Activated B cell treated with CpG ODN at 0.5 μM for 24 hours (primary cell): ENCODE measurements at regions of chr10 and their contacts with region 1.

Region 1: DNA sequence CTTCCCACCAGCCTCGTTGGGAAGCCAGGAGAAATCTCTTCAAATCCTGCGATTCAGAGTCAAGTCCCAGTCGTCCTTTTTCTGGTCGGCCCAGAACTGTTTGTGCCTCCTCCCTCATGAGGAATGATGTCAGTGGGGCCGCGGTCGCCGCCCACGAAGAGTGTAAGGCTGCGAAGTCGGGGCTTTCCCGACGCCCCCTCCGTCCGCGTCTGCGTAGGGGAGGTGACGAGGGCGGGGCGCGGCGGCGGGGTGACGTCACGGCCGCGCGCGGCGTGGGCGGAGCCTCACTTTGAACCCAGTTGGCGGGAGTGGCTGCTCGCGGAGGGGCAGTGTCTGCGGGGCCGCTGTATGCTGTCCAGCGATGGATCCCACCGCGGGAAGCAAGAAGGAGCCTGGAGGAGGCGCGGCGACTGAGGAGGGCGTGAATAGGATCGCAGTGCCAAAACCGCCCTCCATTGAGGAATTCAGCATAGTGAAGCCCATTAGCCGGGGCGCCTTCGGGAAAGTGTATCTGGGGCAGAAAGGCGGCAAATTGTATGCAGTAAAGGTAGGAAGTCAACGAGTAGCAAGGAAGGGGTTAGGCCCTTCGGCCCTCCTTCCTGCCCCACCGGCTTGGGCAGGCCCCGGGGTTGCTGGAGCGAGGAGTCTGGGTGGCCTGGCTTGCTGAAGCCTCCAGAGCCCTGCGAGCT is at the start of gene MASTL:
- DNase-seq: peak; percentile 97
- ATAC-seq: peak; percentile 84
- H3K4me3 Mint-ChIP-seq: peak within 1 kb of the TSS; percentile 100
- H3K27ac Mint-ChIP-seq: peak within 1 kb of the TSS; percentile 100
- H3K4me1 Mint-ChIP-seq: peaks cover 44% of the 10 kb centered on the region
- H3K27me3 Mint-ChIP-seq: no peaks in the 10 kb centered on the region
- CTCF ChIP-seq: no peak
- total RNA-seq, gene MASTL: 11.2 and 12.4 TPM in 2 replicates

Region 2: GRCh38 chr10:26697163-26697921 is 457.9 kb before region 1 on chr10 and contains the start of gene PDSS1:
- CTCF ChIA-PET with region 1: no interaction called
- POLR2A ChIA-PET with region 1: interaction called, 16 read pairs
- intact Hi-C with region 1: loop called (anchors 1 kb)
- DNase-seq: peak; percentile 65
- ATAC-seq: peak; percentile 87
- H3K4me3 Mint-ChIP-seq: peak within 1 kb of the TSS; percentile 93
- H3K27ac Mint-ChIP-seq: peak within 1 kb of the TSS; percentile 84
- H3K4me1 Mint-ChIP-seq: peaks cover 27% of the 10 kb centered on the region
- H3K27me3 Mint-ChIP-seq: no peaks in the 10 kb centered on the region
- CTCF ChIP-seq: no peak
- total RNA-seq, gene PDSS1: 8.7 and 9.0 TPM in 2 replicates

Region 3: DNA sequence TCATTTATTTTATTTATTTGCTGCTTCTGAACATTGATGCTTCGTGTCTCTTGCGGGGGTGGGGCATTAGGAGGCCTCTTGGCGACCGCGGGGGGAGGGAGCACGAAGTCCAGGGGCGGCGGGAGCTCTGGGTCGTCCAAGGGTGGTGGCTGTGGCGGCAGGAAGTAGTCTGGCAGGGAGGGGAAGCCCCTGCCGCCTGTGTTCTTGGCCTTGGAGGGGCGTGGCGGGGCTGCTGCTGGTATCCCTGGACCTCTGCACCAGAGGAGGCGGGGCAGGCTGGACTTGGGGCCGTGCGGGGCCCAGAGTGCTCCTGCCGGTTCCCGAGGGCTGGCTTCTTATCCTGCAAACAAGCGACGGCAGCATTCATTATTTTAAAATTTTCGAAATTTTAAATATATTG is 224.0 kb before region 1 on chr10:
- CTCF ChIA-PET with region 1: no interaction called
- POLR2A ChIA-PET with region 1: no interaction called
- intact Hi-C with region 1: no loop called
- DNase-seq: no peak
- ATAC-seq: peak; percentile 64
- H3K4me3 Mint-ChIP-seq: no peak overlapping the region
- H3K27ac Mint-ChIP-seq: no peak overlapping the region
- H3K4me1 Mint-ChIP-seq: peaks cover 6% of the 10 kb centered on the region
- H3K27me3 Mint-ChIP-seq: peaks cover 4% of the 10 kb centered on the region
- CTCF ChIP-seq: no peak

Region 4: DNA sequence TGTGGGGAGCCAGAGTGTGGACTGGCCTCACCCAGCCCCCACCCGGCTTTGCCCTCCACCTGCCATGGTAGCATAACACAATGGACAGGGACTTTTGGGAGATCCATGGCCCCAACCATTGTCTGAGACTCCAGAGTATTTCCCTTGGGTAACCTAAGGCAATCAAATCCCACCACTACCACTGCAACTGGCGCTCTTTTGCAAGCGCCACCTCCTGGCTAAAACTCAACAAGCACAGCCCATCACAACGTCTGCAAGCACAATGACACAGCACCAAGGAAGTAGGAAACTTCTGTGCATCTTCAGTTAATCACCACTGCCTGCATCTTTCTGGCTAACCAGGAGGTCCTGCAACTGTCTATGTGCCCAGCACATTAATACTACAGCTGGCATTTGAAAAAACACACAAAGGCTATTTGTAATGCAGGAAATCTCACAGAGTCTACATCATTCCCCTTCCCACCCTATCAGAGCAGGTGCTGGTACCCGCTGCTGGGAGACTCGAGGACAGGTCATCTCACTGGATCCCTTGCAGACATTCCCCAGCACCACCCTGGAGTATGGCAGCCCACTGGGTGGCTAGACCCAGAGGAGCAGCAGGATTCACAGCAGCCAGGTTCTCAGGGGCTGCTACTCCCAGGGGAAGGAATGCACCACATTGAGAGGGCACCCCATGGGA is 82.6 kb before region 1 on chr10:
- CTCF ChIA-PET with region 1: no interaction called
- POLR2A ChIA-PET with region 1: no interaction called
- intact Hi-C with region 1: no loop called
- DNase-seq: no peak
- ATAC-seq: no peak
- H3K4me3 Mint-ChIP-seq: no peak overlapping the region
- H3K27ac Mint-ChIP-seq: no peak overlapping the region
- H3K4me1 Mint-ChIP-seq: peaks cover 6% of the 10 kb centered on the region
- H3K27me3 Mint-ChIP-seq: no peaks in the 10 kb centered on the region
- CTCF ChIP-seq: no peak

Region 5: GRCh38 chr10:27504007-27504807 is 349.0 kb after region 1 on chr10 and contains the start of gene RAB18:
- CTCF ChIA-PET with region 1: no interaction called
- POLR2A ChIA-PET with region 1: interaction called, 14 read pairs
- intact Hi-C with region 1: loop called (anchors 1 kb)
- DNase-seq: peak; percentile 93
- ATAC-seq: peak; percentile 96
- H3K4me3 Mint-ChIP-seq: peak within 1 kb of the TSS; percentile 100
- H3K27ac Mint-ChIP-seq: peak within 1 kb of the TSS; percentile 99
- H3K4me1 Mint-ChIP-seq: peaks cover 41% of the 10 kb centered on the region
- H3K27me3 Mint-ChIP-seq: no peaks in the 10 kb centered on the region
- CTCF ChIP-seq: no peak
- total RNA-seq, gene RAB18: 48.3 and 55.6 TPM in 2 replicates